ENCODE measurements at regions of chr4 and their contacts with region 1.

Region 1: GRCh38 chr4:74675673-74676279 is 118.5 kb downstream of the BTC start:
- DNase-seq: no peak
- H3K4me3 ChIP-seq: no peak overlapping the region
- H3K27ac ChIP-seq: no peak overlapping the region
- H3K4me1 ChIP-seq: no peaks in the 10 kb centered on the region
- H3K27me3 ChIP-seq: no peaks in the 10 kb centered on the region
- CTCF ChIP-seq: peak in 2 of 3 experiments; percentile 70 to 78; a peak in 3 of 4 replicates
- EP300 ChIP-seq: no peak
- POLR2A ChIP-seq: no peak
- RAD21 ChIP-seq: peak; percentile 89

Region 2: DNA sequence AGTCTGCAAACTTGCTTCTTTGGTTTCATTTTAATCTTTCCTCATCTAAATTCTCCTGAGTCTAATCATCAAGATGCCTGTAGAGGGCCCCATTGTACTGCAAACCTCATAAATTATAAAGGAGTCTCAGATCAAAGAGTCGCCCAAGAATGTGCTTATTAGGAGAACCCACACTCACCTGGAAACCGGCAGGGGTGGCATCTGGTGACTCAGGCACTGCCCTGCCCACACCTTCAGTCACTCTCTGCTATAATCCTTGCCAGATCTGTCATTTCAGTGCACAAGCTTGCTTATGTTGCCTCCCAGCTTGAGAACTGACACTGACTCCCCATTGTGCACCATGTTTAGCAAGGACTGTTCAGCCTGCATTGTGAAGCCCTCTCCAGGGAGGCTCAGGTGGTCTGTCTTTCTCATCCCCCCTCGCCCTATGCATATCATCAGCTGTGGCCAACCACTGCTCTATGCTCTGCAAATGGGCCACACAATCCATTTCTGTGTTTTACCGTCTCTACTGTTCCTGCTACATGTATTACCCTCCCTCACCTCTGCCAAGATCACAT is 355.1 kb before region 1 on chr4:
- CTCF ChIA-PET with region 1: interaction called, 42 read pairs
- POLR2A ChIA-PET with region 1: no interaction called
- DNase-seq: peak; percentile 27 to 64
- H3K4me3 ChIP-seq: peak overlapping the region in 1 of 4 experiments; percentile 2; a peak in 1 of 8 replicates
- H3K27ac ChIP-seq: no peak overlapping the region
- H3K4me1 ChIP-seq: peaks cover 0 to 7% (median under 1%) of the 10 kb centered on the region in 4 experiments; a peak in 2 of 7 replicates
- H3K27me3 ChIP-seq: no peaks in the 10 kb centered on the region
- CTCF ChIP-seq: peak in 2 of 3 experiments; percentile 45 to 48; a peak in 2 of 4 replicates
- EP300 ChIP-seq: no peak
- POLR2A ChIP-seq: no peak
- RAD21 ChIP-seq: peak; percentile 80 to 82

Region 3: GRCh38 chr4:74376888-74377483 is 298.8 kb before region 1 on chr4:
- CTCF ChIA-PET with region 1: interaction called, 73 read pairs
- POLR2A ChIA-PET with region 1: no interaction called
- DNase-seq: no peak
- H3K4me3 ChIP-seq: no peak overlapping the region
- H3K27ac ChIP-seq: no peak overlapping the region
- H3K4me1 ChIP-seq: no peaks in the 10 kb centered on the region
- H3K27me3 ChIP-seq: no peaks in the 10 kb centered on the region
- CTCF ChIP-seq: peak in 2 of 3 experiments; percentile 36 to 49; a peak in 2 of 4 replicates
- EP300 ChIP-seq: no peak
- POLR2A ChIP-seq: no peak
- RAD21 ChIP-seq: peak; percentile 71 to 73

Region 4: GRCh38 chr4:74543231-74543670 is 132.5 kb before region 1 on chr4:
- CTCF ChIA-PET with region 1: interaction called, 11 read pairs
- POLR2A ChIA-PET with region 1: no interaction called
- DNase-seq: no peak
- H3K4me3 ChIP-seq: no peak overlapping the region
- H3K27ac ChIP-seq: no peak overlapping the region
- H3K4me1 ChIP-seq: peaks cover 0 to 8% (median 2%) of the 10 kb centered on the region in 4 experiments; a peak in 3 of 7 replicates
- H3K27me3 ChIP-seq: no peaks in the 10 kb centered on the region
- CTCF ChIP-seq: no peak
- EP300 ChIP-seq: no peak
- POLR2A ChIP-seq: no peak
- RAD21 ChIP-seq: no peak

Region 5: DNA sequence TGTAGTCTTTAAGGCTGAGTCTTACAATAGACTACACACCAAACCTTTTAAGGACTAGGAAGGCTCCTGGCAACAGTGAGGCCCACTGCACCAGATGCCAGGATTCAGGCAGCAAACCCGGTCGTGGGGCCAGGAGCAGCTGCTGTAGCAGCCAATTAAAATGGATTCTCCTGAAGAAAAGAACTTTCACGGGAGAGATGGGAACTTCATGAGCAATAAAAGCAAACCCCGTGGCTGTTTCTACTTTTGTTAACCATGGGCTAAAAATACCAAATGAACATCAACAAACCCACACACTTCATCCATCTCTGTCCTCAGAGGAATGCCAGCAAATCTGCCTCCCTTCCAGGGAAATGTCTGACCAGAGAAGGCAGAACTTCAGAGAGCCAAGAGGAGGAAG is 17.2 kb after region 1 on chr4:
- CTCF ChIA-PET with region 1: interaction called, 10 read pairs
- POLR2A ChIA-PET with region 1: no interaction called
- DNase-seq: no peak
- H3K4me3 ChIP-seq: no peak overlapping the region
- H3K27ac ChIP-seq: no peak overlapping the region
- H3K4me1 ChIP-seq: peaks cover 0 to 2% (median 0%) of the 10 kb centered on the region in 4 experiments; a peak in 1 of 7 replicates
- H3K27me3 ChIP-seq: no peaks in the 10 kb centered on the region
- CTCF ChIP-seq: no peak
- EP300 ChIP-seq: no peak
- POLR2A ChIP-seq: no peak
- RAD21 ChIP-seq: no peak

Measured in H1 (cell line).